B cell (primary cell): ENCODE measurements at regions of chr14 and their contacts with region 1.

Region 1: GRCh38 chr14:75982266-75983018 is 647 bp upstream of the TGFB3 start:
- DNase-seq: peak; percentile 86
- ATAC-seq: peak; percentile 70
- H3K4me3 ChIP-seq: peak overlapping the region; percentile 45 to 87 (median 74)
- H3K4me3 Mint-ChIP-seq: peak overlapping the region; percentile 89
- H3K27ac ChIP-seq: peak overlapping the region in 1 of 2 donors; percentile 82
- H3K27ac Mint-ChIP-seq: peak overlapping the region; percentile 87
- H3K4me1 ChIP-seq: peaks cover 41 to 56% of the 10 kb centered on the region in 2 donors
- H3K4me1 Mint-ChIP-seq: peaks cover 54% of the 10 kb centered on the region
- H3K27me3 ChIP-seq: no peaks in the 10 kb centered on the region
- H3K27me3 Mint-ChIP-seq: no peaks in the 10 kb centered on the region
- CTCF ChIP-seq: peak; percentile 78

Region 2: DNA sequence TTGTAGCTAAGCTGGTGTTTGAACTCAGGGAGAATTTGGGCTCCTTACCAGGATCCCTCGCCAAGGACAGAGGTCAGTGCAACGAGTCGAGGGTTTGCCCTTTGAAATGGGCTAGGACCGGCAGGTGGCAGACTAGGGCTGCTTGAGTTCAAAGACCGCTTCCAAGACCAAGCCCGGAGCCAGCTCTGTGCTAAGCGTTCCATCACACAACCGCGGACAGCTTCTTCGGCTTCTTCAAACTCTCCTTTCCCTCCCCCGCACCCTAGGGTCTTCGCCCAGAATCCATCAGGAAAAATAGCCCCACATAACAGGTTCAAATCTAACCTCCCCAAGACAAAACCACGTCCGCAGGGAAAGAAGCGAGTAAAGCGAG is 404.7 kb before region 1 on chr14:
- CTCF ChIA-PET with region 1: interaction called, 36 read pairs
- POLR2A ChIA-PET with region 1: no interaction called
- intact Hi-C with region 1: loop called (anchors 1 kb)
- DNase-seq: peak; percentile 81
- ATAC-seq: peak; percentile 88
- H3K4me3 ChIP-seq: peak overlapping the region; percentile 51 to 83 (median 65)
- H3K4me3 Mint-ChIP-seq: peak overlapping the region; percentile 99
- H3K27ac ChIP-seq: no peak overlapping the region
- H3K27ac Mint-ChIP-seq: peak overlapping the region; percentile 77
- H3K4me1 ChIP-seq: peaks cover 7 to 20% of the 10 kb centered on the region in 2 donors
- H3K4me1 Mint-ChIP-seq: peaks cover 21% of the 10 kb centered on the region
- H3K27me3 ChIP-seq: peaks cover 0 to 15% (median 0%) of the 10 kb centered on the region in 4 experiments
- H3K27me3 Mint-ChIP-seq: no peaks in the 10 kb centered on the region
- CTCF ChIP-seq: peak; percentile 84

Region 3: GRCh38 chr14:75709207-75709812 is 273.1 kb before region 1 on chr14:
- CTCF ChIA-PET with region 1: interaction called, 197 read pairs
- POLR2A ChIA-PET with region 1: interaction called, 8 read pairs
- intact Hi-C with region 1: loop called (anchors 1 kb)
- DNase-seq: peak; percentile 75
- ATAC-seq: peak; percentile 51
- H3K4me3 ChIP-seq: no peak overlapping the region
- H3K4me3 Mint-ChIP-seq: no peak overlapping the region
- H3K27ac ChIP-seq: no peak overlapping the region
- H3K27ac Mint-ChIP-seq: no peak overlapping the region
- H3K4me1 ChIP-seq: no peaks in the 10 kb centered on the region
- H3K4me1 Mint-ChIP-seq: no peaks in the 10 kb centered on the region
- H3K27me3 ChIP-seq: no peaks in the 10 kb centered on the region
- H3K27me3 Mint-ChIP-seq: no peaks in the 10 kb centered on the region
- CTCF ChIP-seq: peak; percentile 86

Region 4: DNA sequence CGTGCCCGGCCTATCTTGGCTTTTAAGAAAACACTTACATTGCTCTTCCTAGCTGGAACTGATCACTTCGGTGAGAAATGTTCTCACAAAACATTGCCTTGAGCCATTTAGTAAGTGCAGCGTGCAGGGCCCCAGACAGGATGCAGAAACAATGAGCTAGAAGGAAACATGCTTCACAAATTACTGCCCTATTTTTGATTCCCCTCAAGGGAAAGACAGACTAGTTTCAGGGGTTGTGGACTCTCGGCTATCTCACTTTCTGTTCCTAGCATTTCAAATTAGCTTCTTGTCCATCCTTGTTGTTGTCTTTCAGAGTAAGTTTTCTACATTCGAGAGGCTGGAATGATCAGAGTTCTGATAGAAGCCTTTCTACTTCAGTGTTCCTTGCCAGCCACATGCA is 22.2 kb before region 1 on chr14:
- CTCF ChIA-PET with region 1: interaction called, 27 read pairs
- POLR2A ChIA-PET with region 1: interaction called, 4 read pairs
- intact Hi-C with region 1: no loop called
- DNase-seq: peak; percentile 48
- ATAC-seq: peak; percentile 69
- H3K4me3 ChIP-seq: peak overlapping the region in 2 of 5 experiments; percentile 12 to 54
- H3K4me3 Mint-ChIP-seq: peak overlapping the region; percentile 78
- H3K27ac ChIP-seq: peak overlapping the region; percentile 69 to 90
- H3K27ac Mint-ChIP-seq: peak overlapping the region; percentile 93
- H3K4me1 ChIP-seq: peaks cover 33 to 36% of the 10 kb centered on the region in 2 donors
- H3K4me1 Mint-ChIP-seq: peaks cover 51% of the 10 kb centered on the region
- H3K27me3 ChIP-seq: no peaks in the 10 kb centered on the region
- H3K27me3 Mint-ChIP-seq: no peaks in the 10 kb centered on the region
- CTCF ChIP-seq: no peak

Region 5: GRCh38 chr14:76080025-76080424 is 97.6 kb after region 1 on chr14:
- CTCF ChIA-PET with region 1: no interaction called
- POLR2A ChIA-PET with region 1: no interaction called
- intact Hi-C with region 1: no loop called
- DNase-seq: no peak
- ATAC-seq: no peak
- H3K4me3 ChIP-seq: no peak overlapping the region
- H3K4me3 Mint-ChIP-seq: no peak overlapping the region
- H3K27ac ChIP-seq: no peak overlapping the region
- H3K27ac Mint-ChIP-seq: no peak overlapping the region
- H3K4me1 ChIP-seq: no peaks in the 10 kb centered on the region
- H3K4me1 Mint-ChIP-seq: peaks cover 4% of the 10 kb centered on the region
- H3K27me3 ChIP-seq: no peaks in the 10 kb centered on the region
- H3K27me3 Mint-ChIP-seq: no peaks in the 10 kb centered on the region
- CTCF ChIP-seq: no peak

Region 6: GRCh38 chr14:76151398-76152339 is 169.2 kb after region 1 on chr14 and contains the start of gene GPATCH2L:
- CTCF ChIA-PET with region 1: no interaction called
- POLR2A ChIA-PET with region 1: no interaction called
- intact Hi-C with region 1: loop called (anchors 1 kb)
- DNase-seq: peak; percentile 96
- ATAC-seq: peak; percentile 95
- H3K4me3 ChIP-seq: peak within 1 kb of the TSS; percentile 62 to 96 (median 90)
- H3K4me3 Mint-ChIP-seq: peak within 1 kb of the TSS; percentile 98
- H3K27ac ChIP-seq: peak within 1 kb of the TSS; percentile 88 to 95
- H3K27ac Mint-ChIP-seq: peak within 1 kb of the TSS; percentile 97
- H3K4me1 ChIP-seq: peaks cover 30 to 31% of the 10 kb centered on the region in 2 donors
- H3K4me1 Mint-ChIP-seq: peaks cover 51% of the 10 kb centered on the region
- H3K27me3 ChIP-seq: no peaks in the 10 kb centered on the region
- H3K27me3 Mint-ChIP-seq: no peaks in the 10 kb centered on the region
- CTCF ChIP-seq: no peak
- total RNA-seq, gene GPATCH2L: 82.7 and 97.8 TPM in 2 replicates